Right ventricle myocardium inferior (tissue), 1 donor: ENCODE measurements at regions of chr2 and their contacts with region 1.

Region 1: GRCh38 chr2:98160554-98160953 is 73.6 kb downstream of the VWA3B start:
- DNase-seq: no peak
- ATAC-seq: peak; percentile 74

Region 2: GRCh38 chr2:97995734-97996624 is 164.6 kb before region 1 on chr2 and contains the start of gene TMEM131:
- intact Hi-C with region 1: loop called (anchors 5 kb)
- DNase-seq: peak; percentile 97
- ATAC-seq: peak; percentile 98
- total RNA-seq, gene TMEM131: 26.0 TPM

Region 3: DNA sequence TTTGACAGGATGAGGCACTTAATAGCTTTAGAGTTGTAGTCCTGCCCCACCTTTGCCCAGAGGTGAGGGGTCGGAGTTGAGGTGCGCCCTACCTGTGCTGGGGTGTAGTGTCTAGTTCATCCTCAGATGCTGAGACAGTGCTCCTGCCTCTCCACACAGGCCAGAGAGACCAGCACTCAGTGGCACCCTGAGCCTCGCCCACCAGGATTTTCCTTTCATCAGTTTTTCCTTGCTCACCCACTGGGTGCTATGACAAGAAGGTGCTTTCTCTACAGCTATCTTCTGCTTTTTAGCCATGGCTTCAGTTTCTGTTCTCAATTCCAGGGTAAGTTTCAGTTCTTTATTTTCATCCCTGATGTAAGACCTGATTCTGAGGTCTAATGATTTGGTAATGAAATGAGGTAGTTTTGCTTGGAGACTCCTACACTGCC is 148.0 kb before region 1 on chr2:
- intact Hi-C with region 1: loop called (anchors 5 kb)
- DNase-seq: no peak
- ATAC-seq: peak; percentile 40

Region 4: GRCh38 chr2:98188351-98189049 is 27.9 kb after region 1 on chr2:
- intact Hi-C with region 1: no loop called
- DNase-seq: no peak
- ATAC-seq: no peak